Activated T-helper 1 cell treated with anti-CD3 and anti-CD28 coated beads, Interleukin-12 subunit alpha, Interleukin-12 subunit beta, Interleukin-2, Interleukin-4 antibody, amounts not matched to agents 30 ng/mL and 10 ng/mL and 1 ng/mL, durations not matched to agents 14 hours and 24 hours and 36 hours (primary cell): ENCODE measurements at regions of chr10 and their contacts with region 1.

Region 1: DNA sequence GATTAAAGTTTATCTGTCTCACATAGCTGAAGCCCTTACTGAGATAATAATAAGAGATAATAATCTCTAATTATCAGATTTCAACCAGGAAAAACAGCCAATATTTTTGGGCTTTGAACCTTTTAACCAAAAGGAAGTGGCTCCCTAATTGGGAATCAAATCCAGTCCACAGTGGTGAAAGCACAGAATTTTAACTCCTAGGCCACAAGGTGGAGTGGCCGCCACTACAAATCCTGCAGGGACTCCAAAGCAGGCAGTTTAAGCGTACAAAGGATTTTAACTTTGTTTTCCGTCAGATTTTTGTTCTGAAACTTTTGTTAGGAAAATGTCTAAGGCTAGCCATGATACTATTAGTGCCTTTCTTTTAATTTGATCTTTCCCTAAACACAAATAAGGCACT is 99.6 kb upstream of the CCNY start:
- DNase-seq: no peak
- H3K4me3 Mint-ChIP-seq: no peak overlapping the region
- H3K27ac Mint-ChIP-seq: no peak overlapping the region
- H3K4me1 Mint-ChIP-seq: no peaks in the 10 kb centered on the region
- H3K27me3 Mint-ChIP-seq: peaks cover 2% of the 10 kb centered on the region

Region 2: GRCh38 chr10:35563261-35563891 is 326.6 kb after region 1 on chr10:
- intact Hi-C with region 1: loop called (anchors 1 kb)
- DNase-seq: peak; percentile 11
- H3K4me3 Mint-ChIP-seq: no peak overlapping the region
- H3K27ac Mint-ChIP-seq: peak overlapping the region; percentile 55
- H3K4me1 Mint-ChIP-seq: no peaks in the 10 kb centered on the region
- H3K27me3 Mint-ChIP-seq: no peaks in the 10 kb centered on the region

Region 3: GRCh38 chr10:36712695-36713094 is 1476.0 kb after region 1 on chr10:
- intact Hi-C with region 1: no loop called
- DNase-seq: no peak
- H3K4me3 Mint-ChIP-seq: no peak overlapping the region
- H3K27ac Mint-ChIP-seq: no peak overlapping the region
- H3K4me1 Mint-ChIP-seq: no peaks in the 10 kb centered on the region
- H3K27me3 Mint-ChIP-seq: no peaks in the 10 kb centered on the region